PC-3 (cell line): ENCODE measurements at regions of chr3 and their contacts with region 1.

Region 1: GRCh38 chr3:101216710-101217465 is 103.5 kb downstream of the IMPG2 start:
- DNase-seq: no peak
- ATAC-seq: no peak
- H3K4me3 ChIP-seq: no peak overlapping the region
- H3K27ac ChIP-seq: no peak overlapping the region
- H3K4me1 ChIP-seq: no peaks in the 10 kb centered on the region
- H3K27me3 ChIP-seq: no peaks in the 10 kb centered on the region
- CTCF ChIP-seq: no peak

Region 2: GRCh38 chr3:101203411-101203810 is 13.5 kb before region 1 on chr3:
- CTCF ChIA-PET with region 1: no interaction called
- POLR2A ChIA-PET with region 1: interaction called, 14 read pairs
- intact Hi-C with region 1: no loop called
- DNase-seq: peak; percentile 72
- ATAC-seq: peak; percentile 76
- H3K4me3 ChIP-seq: no peak overlapping the region
- H3K27ac ChIP-seq: no peak overlapping the region
- H3K4me1 ChIP-seq: peaks cover 12% of the 10 kb centered on the region
- H3K27me3 ChIP-seq: no peaks in the 10 kb centered on the region
- CTCF ChIP-seq: no peak